A549 (cell line): ENCODE measurements at regions of chr17 and their contacts with region 1.

Region 1: DNA sequence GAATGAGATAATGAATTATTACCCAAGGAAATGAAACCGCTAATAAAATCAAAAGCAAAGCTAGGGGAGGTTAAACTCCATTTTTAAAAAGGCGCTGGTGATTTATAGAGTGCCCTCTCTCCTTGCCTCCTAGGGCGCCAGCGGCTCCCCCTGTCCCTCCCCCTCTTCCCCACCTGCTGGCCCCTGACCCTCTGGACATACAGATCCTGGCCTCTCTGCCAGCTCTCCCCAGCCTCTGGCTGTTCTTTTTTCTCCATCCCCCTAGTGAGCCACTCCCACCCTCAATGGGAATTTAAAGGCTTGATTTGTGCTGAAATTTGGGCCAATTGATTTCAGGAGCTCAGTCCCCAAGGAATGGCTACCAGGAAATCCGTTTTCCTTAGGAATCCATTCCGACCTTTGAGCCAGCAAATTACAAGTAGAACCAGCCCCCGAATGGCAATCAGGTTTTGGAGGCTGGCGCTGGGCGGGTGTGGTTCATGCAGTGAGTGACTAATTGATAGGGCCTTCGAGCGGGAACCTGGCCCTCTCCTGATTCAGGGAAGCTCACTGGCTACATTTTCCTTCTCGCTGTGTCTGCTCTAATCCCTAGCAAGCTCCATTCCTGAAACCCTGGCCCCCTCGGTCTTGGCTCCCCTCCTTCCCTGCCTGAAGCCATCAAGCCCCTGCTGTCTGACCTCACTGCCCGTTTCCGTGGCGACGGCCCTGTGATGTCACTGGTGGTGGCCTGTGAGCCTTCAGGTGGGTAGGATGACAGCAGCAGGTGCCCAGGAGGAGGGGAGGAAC is 141.9 kb upstream of the SDK2 start:
- DNase-seq: peak; percentile 54
- ATAC-seq: peak; percentile 26 to 58; a peak in 3 of 6 replicates
- H3K4me3 ChIP-seq: no peak overlapping the region
- H3K27ac ChIP-seq: peak overlapping the region; percentile 24 to 54; a peak in 4 of 6 replicates
- H3K4me1 ChIP-seq: peaks cover 25% of the 10 kb centered on the region
- CTCF ChIP-seq: no peak
- EP300 ChIP-seq: no peak
- POLR2A ChIP-seq: no peak
- RAD21 ChIP-seq: no peak

Region 2: DNA sequence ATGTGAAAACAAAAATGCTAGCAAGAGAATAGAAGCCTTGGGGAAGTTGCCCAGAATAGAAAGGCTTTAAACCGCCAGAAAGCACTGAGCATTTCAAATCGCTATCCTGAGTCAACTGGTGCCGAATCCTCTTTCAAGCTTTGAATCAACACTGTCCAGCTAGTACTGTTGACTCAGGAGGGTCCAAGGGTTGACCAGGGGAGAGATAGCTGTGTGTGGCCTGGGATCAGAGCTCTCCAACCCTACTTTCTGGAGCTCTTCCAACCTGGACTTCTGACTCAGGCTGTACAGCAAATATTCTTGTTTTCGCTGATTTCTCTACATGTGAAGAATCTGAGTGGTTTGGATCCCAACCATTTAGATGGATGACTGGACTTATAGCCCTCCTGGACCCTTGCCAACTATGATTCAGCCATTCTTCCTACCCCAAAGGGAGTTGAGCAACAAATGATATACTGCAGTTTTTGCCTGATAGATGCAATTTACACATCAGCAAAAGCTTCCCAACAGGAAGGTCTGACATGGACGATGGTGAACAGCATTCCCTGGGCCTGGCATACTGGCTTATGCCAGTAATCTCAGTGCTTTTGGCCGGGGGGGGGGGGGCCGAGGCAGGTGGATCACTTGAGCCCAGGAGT is 12.1 kb after region 1 on chr17:
- CTCF ChIA-PET with region 1: interaction called, 5 read pairs
- POLR2A ChIA-PET with region 1: interaction called, 11 read pairs
- DNase-seq: peak; percentile 98 to 100
- ATAC-seq: peak; percentile 91 to 97
- H3K4me3 ChIP-seq: no peak overlapping the region
- H3K27ac ChIP-seq: peak overlapping the region; percentile 92 to 93
- H3K4me1 ChIP-seq: peaks cover 75% of the 10 kb centered on the region
- CTCF ChIP-seq: no peak
- EP300 ChIP-seq: peak; percentile 94
- POLR2A ChIP-seq: no peak
- RAD21 ChIP-seq: peak; percentile 34 to 72